HEK293T (cell line): ENCODE measurements at regions of chr15 and their contacts with region 1.

Region 1: GRCh38 chr15:99704444-99704838 is 28.8 kb downstream of the LYSMD4 start:
- DNase-seq: peak; percentile 67

Region 2: GRCh38 chr15:99275525-99276128 is 428.8 kb before region 1 on chr15:
- CTCF ChIA-PET with region 1: interaction called, 43 read pairs
- POLR2A ChIA-PET with region 1: interaction called, 3 read pairs
- DNase-seq: no peak

Region 3: DNA sequence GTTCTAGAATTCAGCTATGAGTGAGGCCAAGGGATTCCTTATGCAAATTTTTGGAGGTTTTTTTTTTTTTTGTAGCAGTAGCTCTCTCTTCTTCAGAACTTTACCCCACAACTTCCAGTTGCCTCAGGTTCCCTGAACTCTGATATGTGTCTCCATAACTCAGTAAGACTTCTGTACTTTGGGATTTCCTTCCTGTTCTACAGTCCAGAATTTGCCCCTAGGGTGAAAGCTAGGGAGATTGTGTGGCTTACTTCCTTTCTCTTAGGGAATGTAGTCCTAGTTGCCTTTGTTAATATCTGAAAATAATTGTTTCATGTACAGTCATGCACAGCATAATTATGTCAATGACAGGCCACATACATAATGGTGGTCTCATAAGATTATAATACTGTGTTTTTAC is 422.3 kb before region 1 on chr15:
- CTCF ChIA-PET with region 1: interaction called, 18 read pairs
- POLR2A ChIA-PET with region 1: no interaction called
- DNase-seq: no peak

Region 4: DNA sequence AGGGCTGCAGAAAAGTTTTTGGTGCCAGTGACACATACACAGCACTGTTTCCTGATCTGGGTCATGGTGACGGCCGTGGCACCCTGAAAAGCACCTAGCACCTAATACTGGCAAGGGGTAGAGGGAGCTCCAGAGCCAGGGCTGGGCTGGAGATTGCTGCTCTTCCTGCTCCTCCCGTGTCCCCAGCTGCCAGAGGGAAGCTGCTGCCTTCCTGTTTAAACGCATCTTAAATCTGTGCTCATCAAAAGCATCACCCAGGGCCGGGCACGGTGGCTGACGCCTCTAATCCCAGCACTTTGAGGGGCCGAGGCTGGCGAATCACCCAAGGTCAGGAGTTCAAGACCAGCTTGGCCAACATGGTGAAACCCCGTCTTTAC is 295.4 kb before region 1 on chr15:
- CTCF ChIA-PET with region 1: interaction called, 12 read pairs
- POLR2A ChIA-PET with region 1: no interaction called
- DNase-seq: no peak

Region 5: DNA sequence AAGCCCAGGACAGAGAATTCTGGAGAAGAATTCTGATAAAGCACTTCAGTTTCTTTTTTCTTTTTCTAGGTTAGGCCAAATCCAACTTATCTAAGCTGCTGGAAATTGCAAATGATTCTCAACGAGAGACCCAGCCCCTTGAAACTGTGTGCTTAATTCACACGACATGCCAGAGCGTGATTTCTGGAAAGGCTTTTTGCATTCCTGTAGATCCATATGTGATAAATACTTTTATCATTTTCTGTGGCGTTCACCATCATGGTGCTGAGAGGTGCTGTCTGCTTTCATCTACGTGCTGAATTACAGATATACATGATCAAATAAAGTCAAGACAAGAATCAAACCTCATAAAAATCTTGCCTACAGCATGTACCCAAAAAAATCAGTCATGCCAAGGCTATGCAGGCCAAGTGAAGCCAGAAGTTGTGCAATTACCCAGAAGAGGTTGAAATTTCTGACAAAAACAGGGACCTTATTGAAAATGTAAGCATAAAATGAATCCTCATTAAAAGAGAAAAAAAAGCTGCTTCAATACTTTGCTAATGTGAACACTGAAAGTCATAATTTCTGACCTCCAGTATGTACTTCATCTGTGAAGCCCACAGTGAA is 149.5 kb before region 1 on chr15:
- CTCF ChIA-PET with region 1: no interaction called
- POLR2A ChIA-PET with region 1: no interaction called
- DNase-seq: no peak

Region 6: DNA sequence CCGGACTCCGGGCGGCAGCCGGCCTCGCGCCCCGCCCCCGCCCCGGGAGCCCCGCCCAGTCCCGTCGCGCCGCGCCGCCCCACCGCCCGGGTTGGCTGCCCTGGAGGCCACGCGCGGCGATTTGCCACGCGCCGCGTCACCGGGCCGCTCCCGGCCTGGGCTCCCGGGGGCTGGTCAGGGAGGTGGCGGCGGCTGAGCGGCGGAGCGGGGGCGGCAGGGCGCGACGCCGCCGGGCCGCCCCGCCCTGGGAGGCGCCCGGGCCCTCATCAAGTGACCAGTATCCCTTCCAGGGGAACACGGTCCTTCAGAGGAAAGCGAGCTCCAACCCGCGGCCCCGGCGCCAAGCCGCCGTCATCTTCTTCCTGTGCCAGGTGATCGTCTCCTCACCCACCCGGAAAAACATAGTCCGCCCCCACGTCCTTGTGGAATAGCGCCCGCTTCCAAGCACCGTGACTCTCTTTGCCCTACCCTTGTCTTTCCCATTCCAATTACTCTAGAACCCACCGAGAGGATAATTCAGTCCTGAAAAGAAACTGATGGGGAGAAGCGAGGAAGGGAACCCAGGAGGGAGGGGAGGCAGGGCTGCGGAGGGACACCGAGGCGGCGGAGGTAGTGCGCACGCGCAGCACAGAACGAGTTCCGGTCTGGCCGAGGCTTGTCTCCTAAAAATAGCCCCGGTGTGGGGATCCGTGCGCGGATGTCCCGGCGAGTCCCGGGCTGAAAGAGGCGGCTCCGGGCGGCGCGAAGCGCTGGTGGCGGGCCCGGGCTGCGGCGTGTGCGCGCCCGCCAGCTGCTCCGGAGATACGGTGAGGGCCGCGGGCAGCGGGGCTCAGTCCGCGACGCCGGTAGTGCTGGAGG is 138.9 kb before region 1 on chr15 and contains the start of gene MEF2A:
- CTCF ChIA-PET with region 1: interaction called, 16 read pairs
- POLR2A ChIA-PET with region 1: interaction called, 14 read pairs
- DNase-seq: peak; percentile 91

Region 7: GRCh38 chr15:99719096-99719541 is 14.7 kb after region 1 on chr15:
- CTCF ChIA-PET with region 1: interaction called, 20 read pairs
- POLR2A ChIA-PET with region 1: no interaction called
- DNase-seq: no peak

Region 8: GRCh38 chr15:99733268-99734039 is 29.0 kb after region 1 on chr15 and contains the start of gene LYSMD4:
- CTCF ChIA-PET with region 1: interaction called, 14 read pairs
- POLR2A ChIA-PET with region 1: interaction called, 10 read pairs
- DNase-seq: peak; percentile 100